ENCODE measurements at regions of chr17 and their contacts with region 1.

Region 1: DNA sequence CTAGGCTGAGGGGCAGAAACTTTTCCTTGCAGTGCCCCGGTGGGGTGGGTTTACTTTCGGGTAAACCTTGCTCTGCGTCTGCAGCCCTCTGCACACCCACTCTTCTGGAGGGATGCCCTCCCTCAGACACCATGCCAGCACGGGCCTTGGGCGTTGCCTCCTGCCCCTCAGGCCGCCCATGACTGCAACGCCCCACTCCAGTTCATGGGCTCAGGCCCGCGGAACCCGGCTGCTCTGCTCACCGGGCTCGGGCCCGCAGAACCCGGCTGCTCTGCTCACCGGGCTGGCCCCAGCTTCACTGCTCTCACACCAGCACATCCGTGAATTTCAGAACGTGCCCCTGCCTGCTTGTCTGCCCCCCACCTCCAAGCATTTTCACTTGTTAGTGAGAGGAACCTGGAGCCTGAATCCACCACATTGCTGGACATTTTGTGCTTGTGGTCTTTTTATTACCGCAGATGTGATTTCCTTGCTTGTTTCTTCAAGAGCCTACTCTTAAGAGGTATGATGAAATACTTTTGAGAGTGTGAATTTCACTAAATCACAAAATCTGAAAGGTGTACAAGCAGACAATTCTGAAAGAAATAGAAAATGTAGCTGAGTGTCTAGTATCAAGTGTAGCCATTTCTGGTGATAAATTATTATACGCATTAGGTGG is 130.9 kb downstream of the RPTOR start:
- DNase-seq: no peak
- ATAC-seq: no peak
- H3K4me3 Mint-ChIP-seq: no peak overlapping the region
- H3K27ac Mint-ChIP-seq: peak overlapping the region; percentile 79
- H3K4me1 Mint-ChIP-seq: peaks cover 74% of the 10 kb centered on the region
- H3K27me3 Mint-ChIP-seq: no peaks in the 10 kb centered on the region

Region 2: DNA sequence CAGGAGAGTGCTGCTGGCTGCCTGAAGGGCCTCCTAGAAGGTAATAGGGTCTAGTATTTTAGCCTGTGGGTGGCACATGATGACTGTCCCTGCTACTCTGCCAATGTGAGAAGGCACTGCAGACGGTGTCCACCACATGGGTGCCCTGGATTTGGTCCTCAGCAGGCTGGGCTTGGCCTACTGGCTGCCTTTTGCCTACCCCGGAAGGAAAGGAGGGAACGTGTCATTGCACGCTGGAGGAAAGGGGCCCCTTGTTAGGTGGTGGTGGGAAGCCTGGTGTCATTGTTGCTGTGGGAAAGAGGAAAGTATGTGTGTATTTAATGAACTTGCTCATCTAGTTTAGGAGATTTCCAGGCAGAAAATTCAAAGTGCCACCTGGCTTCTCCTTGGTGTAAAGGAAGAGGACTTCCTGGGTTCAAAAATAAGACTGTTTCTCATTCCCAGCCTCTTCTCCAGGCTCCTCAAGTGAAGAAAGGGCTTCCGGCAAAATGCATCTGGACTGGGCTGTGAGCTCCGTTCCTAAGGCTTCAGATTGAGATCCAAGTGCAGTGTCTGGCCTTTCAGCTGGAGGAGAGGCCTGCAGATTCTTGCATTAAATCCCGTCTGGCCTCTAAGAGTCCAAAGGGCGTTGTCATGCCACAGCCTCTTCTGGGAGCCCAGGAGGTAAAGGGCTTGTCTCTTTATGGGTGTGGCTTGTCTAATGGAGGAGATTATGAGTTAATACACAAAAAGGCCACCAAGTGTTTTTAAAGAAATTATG is 75.8 kb before region 1 on chr17:
- CTCF ChIA-PET with region 1: interaction called, 3 read pairs
- POLR2A ChIA-PET with region 1: no interaction called
- intact Hi-C with region 1: loop called (anchors 2 to 5 kb)
- DNase-seq: peak; percentile 35
- ATAC-seq: peak; percentile 48
- H3K4me3 Mint-ChIP-seq: no peak overlapping the region
- H3K27ac Mint-ChIP-seq: peak overlapping the region; percentile 78
- H3K4me1 Mint-ChIP-seq: peaks cover 87% of the 10 kb centered on the region
- H3K27me3 Mint-ChIP-seq: no peaks in the 10 kb centered on the region

Measured in activated CD4-positive, alpha-beta T cell treated with anti-CD3 and anti-CD28 coated beads for 36 hours (primary cell).